CD8-positive, alpha-beta memory T cell (primary cell): ENCODE measurements at regions of chr19 and their contacts with region 1.

Region 1: DNA sequence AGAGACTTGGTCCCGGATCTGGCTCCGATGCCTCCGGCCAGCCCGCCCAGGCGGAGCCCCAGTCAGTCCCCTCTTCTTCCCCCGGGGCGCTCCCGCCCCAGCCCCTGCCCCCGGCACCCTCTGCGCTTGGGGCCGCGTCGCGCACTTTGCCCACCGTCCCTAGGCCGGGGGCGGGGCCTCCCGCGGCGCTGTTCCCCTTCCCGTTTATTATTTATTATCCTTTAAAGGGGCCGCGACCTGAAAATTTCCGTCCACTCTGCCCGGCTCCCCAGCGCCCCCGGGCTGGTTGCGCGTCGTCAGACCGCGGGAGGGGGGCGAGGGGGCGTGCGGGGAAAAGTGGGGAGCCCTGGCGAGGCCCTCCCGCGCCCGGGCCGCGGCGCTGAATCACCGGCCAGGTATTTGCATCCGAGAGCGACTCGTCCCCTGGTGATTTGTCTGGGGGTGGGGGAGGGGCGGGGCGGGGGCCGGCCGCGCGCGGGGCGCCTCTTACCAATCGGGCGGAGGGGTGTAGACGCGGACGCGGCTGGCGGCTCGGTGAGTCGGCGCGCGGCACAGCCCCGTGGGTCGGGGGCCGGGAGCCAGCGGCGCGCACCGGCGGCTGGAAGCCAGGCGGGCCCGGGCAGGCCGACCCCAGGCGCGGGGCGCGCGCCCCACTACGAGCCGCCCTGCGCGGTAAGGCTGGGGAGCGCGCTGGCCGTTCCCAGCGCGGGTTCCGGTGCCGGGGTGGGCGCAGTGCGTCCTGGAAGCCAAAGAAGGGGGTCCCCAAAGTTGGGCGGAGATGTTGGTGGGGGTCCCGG is at the start of gene ARID3A:
- DNase-seq: peak; percentile 60 to 82 (median 74)
- H3K4me3 ChIP-seq: peak within 1 kb of the TSS; percentile 84
- H3K4me3 Mint-ChIP-seq: peak within 1 kb of the TSS; percentile 76 to 92 (median 83)
- H3K27ac ChIP-seq: peak within 1 kb of the TSS; percentile 74
- H3K27ac Mint-ChIP-seq: peak within 1 kb of the TSS in 7 of 8 donors; percentile 21 to 91 (median 76)
- H3K4me1 ChIP-seq: peaks cover 18% of the 10 kb centered on the region
- H3K4me1 Mint-ChIP-seq: peaks cover 4 to 30% (median 15%) of the 10 kb centered on the region in 3 donors
- H3K27me3 ChIP-seq: no peaks in the 10 kb centered on the region
- H3K27me3 Mint-ChIP-seq: no peaks in the 10 kb centered on the region
- total RNA-seq, gene ARID3A: 12.8 to 15.9 TPM

Region 2: GRCh38 chr19:814258-815078 is 111.3 kb before region 1 on chr19:
- CTCF ChIA-PET with region 1: no interaction called
- POLR2A ChIA-PET with region 1: no interaction called
- DNase-seq: no peak
- H3K4me3 ChIP-seq: no peak overlapping the region
- H3K4me3 Mint-ChIP-seq: peak overlapping the region in 2 of 7 donors; percentile 23 to 31
- H3K27ac ChIP-seq: no peak overlapping the region
- H3K27ac Mint-ChIP-seq: peak overlapping the region in 4 of 8 donors; percentile 27 to 72 (median 44)
- H3K4me1 ChIP-seq: no peaks in the 10 kb centered on the region
- H3K4me1 Mint-ChIP-seq: no peaks in the 10 kb centered on the region
- H3K27me3 ChIP-seq: no peaks in the 10 kb centered on the region
- H3K27me3 Mint-ChIP-seq: no peaks in the 10 kb centered on the region

Region 3: DNA sequence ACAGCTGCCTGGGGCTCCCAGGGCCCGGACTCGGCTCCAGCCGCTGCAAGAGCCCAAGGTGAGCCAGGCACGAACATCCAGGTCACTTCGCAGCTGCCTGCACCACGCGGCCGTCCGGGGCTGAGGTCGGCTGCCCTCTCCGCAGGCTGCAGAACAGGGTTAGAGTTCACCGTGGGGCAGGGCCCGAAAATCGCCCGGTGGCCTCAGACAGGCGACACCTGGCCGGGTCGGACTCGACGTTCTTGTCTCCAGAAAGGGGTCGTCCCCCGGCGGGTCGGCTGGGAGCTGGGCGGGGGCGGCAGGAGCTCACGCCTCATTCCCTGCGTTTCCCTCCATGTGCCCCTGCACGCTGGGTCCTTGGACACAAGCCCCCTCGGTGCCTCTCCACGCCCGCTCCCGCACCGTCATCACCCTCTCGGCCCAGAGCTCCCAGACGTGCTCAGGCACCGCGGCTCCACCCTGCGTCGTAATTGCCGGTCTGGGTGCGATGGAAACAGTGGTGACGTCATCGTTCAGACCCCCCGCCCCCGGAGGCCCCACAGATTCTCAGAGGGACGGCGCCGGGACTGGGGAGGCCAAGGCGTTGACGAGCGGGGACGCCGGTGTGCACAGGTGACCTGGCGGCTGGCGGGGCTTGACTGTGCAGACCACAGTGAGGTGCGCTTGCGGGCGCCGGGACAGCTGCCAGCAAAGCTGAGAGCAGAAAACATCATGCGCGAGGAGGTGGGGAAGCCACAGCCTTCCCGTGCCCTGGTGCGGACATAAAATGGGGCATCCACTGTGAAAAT is 70.5 kb after region 1 on chr19:
- CTCF ChIA-PET with region 1: interaction called, 15 read pairs
- POLR2A ChIA-PET with region 1: no interaction called
- DNase-seq: peak; percentile 86 to 94 (median 90)
- H3K4me3 ChIP-seq: peak overlapping the region; percentile 34
- H3K4me3 Mint-ChIP-seq: peak overlapping the region; percentile 67 to 86 (median 76)
- H3K27ac ChIP-seq: no peak overlapping the region
- H3K27ac Mint-ChIP-seq: peak overlapping the region; percentile 85 to 99 (median 93)
- H3K4me1 ChIP-seq: peaks cover 26% of the 10 kb centered on the region
- H3K4me1 Mint-ChIP-seq: peaks cover 6 to 37% (median 13%) of the 10 kb centered on the region in 3 donors
- H3K27me3 ChIP-seq: peaks cover 21% of the 10 kb centered on the region
- H3K27me3 Mint-ChIP-seq: peaks cover 3 to 22% of the 10 kb centered on the region in 2 donors